Activated B cell treated with CpG ODN at 0.5 μM for 24 hours (primary cell): ENCODE measurements at regions of chr9 and their contacts with region 1.

Region 1: GRCh38 chr9:137129456-137130175 is 9.3 kb upstream of the GRIN1 start:
- DNase-seq: peak; percentile 88
- ATAC-seq: peak; percentile 95
- H3K4me3 Mint-ChIP-seq: peak overlapping the region; percentile 82
- H3K27ac Mint-ChIP-seq: peak overlapping the region; percentile 80
- H3K4me1 Mint-ChIP-seq: peaks cover 32% of the 10 kb centered on the region
- H3K27me3 Mint-ChIP-seq: peaks cover 2% of the 10 kb centered on the region
- CTCF ChIP-seq: no peak

Region 2: DNA sequence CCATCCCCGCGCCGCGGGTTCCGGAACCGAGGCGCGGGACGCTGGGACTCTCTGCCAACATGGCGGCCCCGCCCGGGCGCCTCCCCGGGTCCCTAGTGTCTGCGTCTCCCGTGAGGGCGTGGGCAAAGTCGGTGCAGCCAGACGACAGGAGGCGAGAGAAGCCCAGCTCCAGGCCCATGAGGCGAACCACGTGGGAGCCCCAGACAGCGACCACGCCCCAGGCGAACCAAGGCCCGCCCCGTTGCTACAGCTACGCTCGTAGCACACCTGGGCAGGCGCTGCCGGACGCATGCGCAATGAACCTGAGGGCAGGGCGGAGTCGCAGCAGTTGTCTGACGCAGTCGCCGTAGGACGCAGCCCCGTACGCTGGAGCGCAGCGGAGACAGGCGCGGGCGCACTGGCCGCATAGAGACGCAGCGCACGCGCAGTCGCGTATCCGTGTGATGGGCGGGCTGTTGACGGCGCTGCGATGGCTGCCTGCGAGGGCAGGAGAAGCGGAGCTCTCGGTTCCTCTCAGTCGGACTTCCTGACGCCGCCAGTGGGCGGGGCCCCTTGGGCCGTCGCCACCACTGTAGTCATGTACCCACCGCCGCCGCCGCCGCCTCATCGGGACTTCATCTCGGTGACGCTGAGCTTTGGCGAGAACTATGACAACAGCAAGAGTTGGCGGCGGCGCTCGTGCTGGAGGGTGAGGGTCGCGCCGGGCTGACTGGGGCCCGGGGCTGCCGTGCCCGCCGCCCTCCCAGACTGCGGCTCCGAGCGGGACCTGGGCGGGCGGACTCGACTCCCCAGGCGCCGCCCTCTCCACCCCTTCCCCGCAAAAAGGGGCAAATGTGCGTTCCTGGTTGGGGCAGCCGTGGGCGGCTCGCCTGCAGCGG is 42.8 kb before region 1 on chr9 and contains the start of gene MAN1B1:
- CTCF ChIA-PET with region 1: no interaction called
- POLR2A ChIA-PET with region 1: interaction called, 10 read pairs
- intact Hi-C with region 1: no loop called
- DNase-seq: peak; percentile 98
- ATAC-seq: peak; percentile 77
- H3K4me3 Mint-ChIP-seq: peak within 1 kb of the TSS; percentile 93
- H3K27ac Mint-ChIP-seq: peak within 1 kb of the TSS; percentile 97
- H3K4me1 Mint-ChIP-seq: peaks cover 49% of the 10 kb centered on the region
- H3K27me3 Mint-ChIP-seq: no peaks in the 10 kb centered on the region
- CTCF ChIP-seq: no peak
- total RNA-seq, gene MAN1B1: 33.6 and 37.7 TPM in 2 replicates

Region 3: GRCh38 chr9:137150617-137151457 is 21.2 kb after region 1 on chr9:
- CTCF ChIA-PET with region 1: no interaction called
- POLR2A ChIA-PET with region 1: interaction called, 76 read pairs
- intact Hi-C with region 1: loop called (anchors 1 kb)
- DNase-seq: peak; percentile 67
- ATAC-seq: peak; percentile 67
- H3K4me3 Mint-ChIP-seq: peak overlapping the region; percentile 52
- H3K27ac Mint-ChIP-seq: peak overlapping the region; percentile 92
- H3K4me1 Mint-ChIP-seq: peaks cover 14% of the 10 kb centered on the region
- H3K27me3 Mint-ChIP-seq: peaks cover 9% of the 10 kb centered on the region
- CTCF ChIP-seq: no peak

Region 4: DNA sequence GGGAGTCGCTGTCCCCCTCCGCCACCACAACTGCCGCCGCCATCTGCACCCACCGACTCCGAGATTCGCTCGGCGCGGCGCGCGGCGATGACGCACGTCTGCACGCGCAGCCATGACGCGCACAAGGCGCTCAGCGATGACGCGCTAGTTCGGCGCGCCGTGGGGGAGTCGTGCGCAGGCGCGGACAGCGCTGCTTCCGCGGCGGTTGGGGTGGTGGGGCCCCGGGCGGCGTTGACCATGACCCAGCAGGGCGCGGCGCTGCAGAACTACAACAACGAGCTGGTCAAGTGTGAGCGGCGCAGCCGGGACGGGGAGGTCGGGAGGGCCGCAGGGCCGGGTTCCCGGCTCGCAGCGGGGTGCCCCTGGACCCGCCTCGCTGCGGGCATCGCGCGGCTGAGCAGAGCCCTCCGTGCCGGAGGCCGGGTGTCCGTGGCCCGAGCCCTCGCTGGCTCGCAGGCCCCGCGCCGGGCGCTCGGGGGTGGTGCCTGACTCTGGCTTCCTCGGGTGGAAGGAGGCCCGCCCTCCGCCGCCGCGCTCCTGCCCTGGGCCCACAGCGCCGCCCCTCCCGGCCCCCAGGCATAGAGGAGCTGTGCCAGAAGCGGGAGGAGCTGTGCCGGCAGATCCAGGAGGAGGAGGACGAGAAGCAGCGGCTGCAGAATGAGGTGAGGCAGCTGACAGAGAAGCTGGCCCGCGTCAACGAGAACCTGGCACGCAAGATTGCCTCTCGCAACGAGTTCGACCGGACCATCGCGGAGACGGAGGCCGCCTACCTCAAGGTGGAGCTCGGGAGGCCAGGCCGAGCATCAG is 59.1 kb after region 1 on chr9 and contains the starts of genes ANAPC2 and SSNA1:
- CTCF ChIA-PET with region 1: interaction called, 5 read pairs
- POLR2A ChIA-PET with region 1: interaction called, 29 read pairs
- intact Hi-C with region 1: no loop called
- DNase-seq: peak; percentile 99
- ATAC-seq: peak; percentile 79
- H3K4me3 Mint-ChIP-seq: peak within 1 kb of the TSS; percentile 92
- H3K27ac Mint-ChIP-seq: peak within 1 kb of the TSS; percentile 91
- H3K4me1 Mint-ChIP-seq: peaks cover 36% of the 10 kb centered on the region
- H3K27me3 Mint-ChIP-seq: no peaks in the 10 kb centered on the region
- CTCF ChIP-seq: no peak
- total RNA-seq, gene ANAPC2: 75.7 and 93.9 TPM in 2 replicates
- total RNA-seq, gene SSNA1: 71.9 and 76.8 TPM in 2 replicates

Region 5: GRCh38 chr9:137277329-137278041 is 147.9 kb after region 1 on chr9 and contains the start of gene TOR4A:
- CTCF ChIA-PET with region 1: no interaction called
- POLR2A ChIA-PET with region 1: no interaction called
- intact Hi-C with region 1: loop called (anchors 5 kb)
- DNase-seq: peak; percentile 61
- ATAC-seq: peak; percentile 70
- H3K4me3 Mint-ChIP-seq: peak within 1 kb of the TSS; percentile 85
- H3K27ac Mint-ChIP-seq: peak within 1 kb of the TSS; percentile 93
- H3K4me1 Mint-ChIP-seq: peaks cover 47% of the 10 kb centered on the region
- H3K27me3 Mint-ChIP-seq: no peaks in the 10 kb centered on the region
- CTCF ChIP-seq: no peak
- total RNA-seq, gene TOR4A: 7.9 and 9.1 TPM in 2 replicates